ENCODE measurements at regions of chr2 and their contacts with region 1.

Region 1: DNA sequence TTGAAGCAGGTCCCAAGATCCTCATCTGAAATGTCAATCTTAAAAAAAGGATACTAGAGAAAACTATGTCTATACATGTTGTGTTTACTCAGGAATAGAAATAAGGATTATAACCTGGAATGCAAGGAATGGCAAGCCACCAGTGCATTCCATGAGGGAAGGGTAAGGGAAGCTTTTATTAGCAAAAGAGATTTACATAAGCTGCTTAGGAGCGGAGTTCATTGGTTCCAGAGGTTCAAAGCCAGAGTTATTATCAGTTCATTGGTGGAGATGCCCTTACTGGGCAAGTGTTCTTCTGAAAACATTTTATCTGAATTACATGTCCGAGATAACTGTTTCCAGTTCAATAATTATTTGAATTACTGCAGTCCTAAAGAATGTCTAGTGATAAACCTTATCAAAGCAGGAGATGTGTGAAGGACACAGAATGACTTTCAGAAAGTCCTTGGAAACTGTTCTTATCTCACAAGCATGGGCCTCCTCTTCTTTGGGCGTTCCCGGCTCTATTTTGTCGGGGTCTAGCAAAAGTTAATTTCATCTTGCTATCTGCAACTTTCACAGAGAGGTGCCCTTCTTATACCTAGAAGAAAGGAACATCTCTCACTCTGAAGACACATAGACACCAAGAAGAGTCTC is 23.5 kb downstream of the COMMD1 start:
- DNase-seq: no peak
- ATAC-seq: peak; percentile 64

Region 2: GRCh38 chr2:61789807-61790602 is 138.9 kb before region 1 on chr2:
- intact Hi-C with region 1: no loop called
- DNase-seq: no peak
- ATAC-seq: no peak

Region 3: GRCh38 chr2:61978522-61978921 is 49.6 kb after region 1 on chr2:
- intact Hi-C with region 1: loop called (anchors 10 kb)
- DNase-seq: no peak
- ATAC-seq: peak; percentile 98

Region 4: GRCh38 chr2:62084801-62085200 is 155.9 kb after region 1 on chr2:
- intact Hi-C with region 1: no loop called
- DNase-seq: no peak
- ATAC-seq: no peak